Esophagus squamous epithelium (tissue), 5 donors: ENCODE measurements at regions of chr16 and their contacts with region 1.

Region 1: GRCh38 chr16:813204-813915 is 12.8 kb upstream of the GNG13 start:
- DNase-seq: no peak
- H3K4me3 ChIP-seq: peak overlapping the region in 2 of 4 donors; percentile 18 to 37
- H3K27ac ChIP-seq: no peak overlapping the region
- H3K4me1 ChIP-seq: peaks cover under 1 to 11% (median 10%) of the 10 kb centered on the region in 3 donors
- H3K27me3 ChIP-seq: peaks cover 5 to 91% (median 20%) of the 10 kb centered on the region in 4 donors
- CTCF ChIP-seq: peak; percentile 29 to 62 (median 43)
- POLR2A ChIP-seq: no peak

Region 2: DNA sequence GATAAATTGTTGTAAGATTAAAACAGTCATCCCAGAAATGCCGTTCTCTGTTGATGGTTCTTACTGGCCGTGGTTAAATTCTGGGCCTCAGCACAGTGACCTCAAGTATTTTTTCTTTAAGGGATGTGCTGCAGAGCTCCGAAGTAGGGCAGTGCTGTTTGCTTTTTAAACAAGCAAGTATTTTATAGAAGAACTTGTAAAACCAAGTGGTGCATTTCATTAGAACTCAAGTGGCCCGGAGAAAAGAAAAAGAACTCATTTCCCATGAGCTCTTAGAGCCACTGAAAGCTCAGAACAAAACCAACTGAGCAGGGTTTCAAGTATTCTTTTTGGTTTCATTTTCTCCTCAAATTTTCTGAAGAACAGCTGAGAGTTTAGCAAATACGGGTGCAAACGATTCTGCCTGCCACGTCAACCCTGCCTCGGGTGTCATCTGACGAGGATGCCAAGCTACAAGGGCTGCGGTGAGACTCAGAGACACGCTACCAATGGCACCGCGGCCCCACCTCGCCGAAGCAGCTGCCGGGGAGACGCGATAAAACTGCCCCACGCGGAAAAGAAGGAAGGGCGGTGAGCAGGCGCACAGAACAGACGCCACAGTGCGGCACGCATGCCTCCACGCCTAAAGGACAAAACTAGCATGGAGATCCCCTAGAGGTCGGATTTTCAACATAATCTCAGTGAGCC is 151.1 kb after region 1 on chr16:
- intact Hi-C with region 1: no loop called
- DNase-seq: no peak
- H3K4me3 ChIP-seq: no peak overlapping the region
- H3K27ac ChIP-seq: no peak overlapping the region
- H3K4me1 ChIP-seq: peaks cover 2 to 12% (median 3%) of the 10 kb centered on the region in 3 donors
- H3K27me3 ChIP-seq: no peaks in the 10 kb centered on the region
- CTCF ChIP-seq: no peak
- POLR2A ChIP-seq: no peak

Region 3: GRCh38 chr16:1054660-1055556 is 241.5 kb after region 1 on chr16:
- intact Hi-C with region 1: loop called (anchors 10 kb)
- DNase-seq: no peak
- H3K4me3 ChIP-seq: no peak overlapping the region
- H3K27ac ChIP-seq: no peak overlapping the region
- H3K4me1 ChIP-seq: peaks cover 0 to 6% (median 0%) of the 10 kb centered on the region in 3 donors
- H3K27me3 ChIP-seq: peaks cover 0 to 86% (median 0%) of the 10 kb centered on the region in 4 donors
- CTCF ChIP-seq: peak; percentile 29 to 82 (median 70)
- POLR2A ChIP-seq: no peak